Heart left ventricle (tissue), 16 donors: ENCODE measurements at regions of chr3 and their contacts with region 1.

Region 1: GRCh38 chr3:152471814-152472671 is 203.3 kb downstream of the MBNL1 start:
- DNase-seq: peak in 4 of 5 donors; percentile 42 to 68 (median 60)
- ATAC-seq: peak; percentile 65 to 77 (median 66)
- H3K4me3 ChIP-seq: peak overlapping the region in 9 of 12 donors; percentile 12 to 48 (median 42)
- H3K27ac ChIP-seq: peak overlapping the region in 2 of 12 donors; percentile 15 to 39
- H3K4me1 ChIP-seq: peaks cover 0 to 10% (median 0%) of the 10 kb centered on the region in 12 donors
- H3K27me3 ChIP-seq: no peaks in the 10 kb centered on the region
- CTCF ChIP-seq: peak; percentile 55 to 84 (median 74)
- POLR2A ChIP-seq: no peak

Region 2: DNA sequence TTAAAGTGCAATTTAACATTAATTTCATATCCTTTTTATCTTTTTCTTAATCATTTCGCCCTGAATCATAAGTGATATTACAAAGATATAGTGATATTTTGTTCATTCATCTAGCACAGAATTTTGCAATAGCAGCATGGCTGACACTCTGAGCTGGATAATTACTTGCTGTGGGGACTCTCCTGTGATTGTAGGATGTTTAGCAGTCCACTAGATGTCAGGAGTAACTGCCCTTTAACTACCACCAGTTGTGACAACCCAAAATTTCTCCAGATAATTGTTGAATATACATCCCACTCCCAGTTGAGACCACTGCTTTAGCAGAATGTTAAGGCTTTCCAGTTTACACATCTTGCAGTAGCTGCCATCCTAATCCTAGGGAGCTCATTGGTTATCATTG is 400.1 kb before region 1 on chr3:
- intact Hi-C with region 1: loop called in 6 of 10 experiments (anchors 2 to 10 kb)
- DNase-seq: no peak
- ATAC-seq: peak in 3 of 4 donors; percentile 52 to 68 (median 55)
- H3K4me3 ChIP-seq: no peak overlapping the region
- H3K27ac ChIP-seq: no peak overlapping the region
- H3K4me1 ChIP-seq: peaks cover 0 to 4% (median 0%) of the 10 kb centered on the region in 12 donors
- H3K27me3 ChIP-seq: no peaks in the 10 kb centered on the region
- CTCF ChIP-seq: peak; percentile 8 to 60 (median 41)
- POLR2A ChIP-seq: no peak

Region 3: GRCh38 chr3:152183473-152183872 is 288.6 kb before region 1 on chr3:
- intact Hi-C with region 1: loop called in 3 of 10 experiments (anchors 2 to 5 kb)
- DNase-seq: peak in 4 of 5 donors; percentile 30 to 53 (median 39)
- ATAC-seq: peak; percentile 58 to 83 (median 66)
- H3K4me3 ChIP-seq: no peak overlapping the region
- H3K27ac ChIP-seq: no peak overlapping the region
- H3K4me1 ChIP-seq: peaks cover 0 to 10% (median 0%) of the 10 kb centered on the region in 12 donors
- H3K27me3 ChIP-seq: no peaks in the 10 kb centered on the region
- CTCF ChIP-seq: peak; percentile 45 to 78 (median 62)
- POLR2A ChIP-seq: no peak

Region 4: DNA sequence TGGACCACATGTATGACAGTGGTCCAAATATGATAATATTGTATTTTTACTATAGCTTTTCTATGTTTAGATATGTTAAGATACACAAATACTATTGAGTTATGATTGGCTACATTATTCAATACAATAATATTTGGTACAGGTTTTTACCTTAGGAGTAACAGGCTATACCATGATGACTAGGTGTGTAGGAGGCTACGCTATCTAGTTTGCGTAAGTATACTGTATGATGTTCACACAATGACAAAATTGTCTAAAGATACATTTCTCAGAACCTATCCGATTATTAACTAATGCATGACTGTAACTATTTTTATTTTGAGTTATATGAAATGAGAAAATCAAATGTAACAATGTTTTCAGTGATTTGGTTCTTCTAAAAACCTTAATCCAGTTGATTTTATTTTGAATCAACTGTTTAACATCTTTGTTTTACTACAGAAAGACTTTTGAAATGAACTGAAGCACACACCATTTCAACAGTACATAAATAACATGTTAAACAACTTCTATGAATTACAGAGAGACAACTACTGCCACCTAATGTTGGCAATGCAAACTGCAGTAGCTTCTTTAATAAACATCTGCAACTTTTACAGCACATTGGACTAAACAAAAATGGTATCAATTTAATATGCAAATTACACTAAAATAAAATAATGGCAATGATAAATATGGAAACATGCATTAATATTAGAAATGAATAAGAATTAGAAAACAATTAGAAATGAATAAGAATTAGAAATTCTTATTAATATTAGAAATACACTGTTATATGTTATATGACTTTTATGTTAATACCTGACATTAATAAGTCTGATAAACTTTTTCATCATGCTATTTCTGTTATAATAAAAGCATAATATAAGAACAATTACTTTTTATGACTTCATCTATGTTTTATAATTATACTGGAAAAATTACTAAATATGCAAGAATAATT is 52.4 kb after region 1 on chr3:
- intact Hi-C with region 1: loop called in 8 of 10 experiments (anchors 5 to 10 kb)
- DNase-seq: peak in 2 of 5 donors; percentile 22 to 35
- ATAC-seq: no peak
- H3K4me3 ChIP-seq: no peak overlapping the region
- H3K27ac ChIP-seq: no peak overlapping the region
- H3K4me1 ChIP-seq: no peaks in the 10 kb centered on the region
- H3K27me3 ChIP-seq: no peaks in the 10 kb centered on the region
- CTCF ChIP-seq: peak; percentile 77 to 94 (median 86)
- POLR2A ChIP-seq: no peak

Region 5: DNA sequence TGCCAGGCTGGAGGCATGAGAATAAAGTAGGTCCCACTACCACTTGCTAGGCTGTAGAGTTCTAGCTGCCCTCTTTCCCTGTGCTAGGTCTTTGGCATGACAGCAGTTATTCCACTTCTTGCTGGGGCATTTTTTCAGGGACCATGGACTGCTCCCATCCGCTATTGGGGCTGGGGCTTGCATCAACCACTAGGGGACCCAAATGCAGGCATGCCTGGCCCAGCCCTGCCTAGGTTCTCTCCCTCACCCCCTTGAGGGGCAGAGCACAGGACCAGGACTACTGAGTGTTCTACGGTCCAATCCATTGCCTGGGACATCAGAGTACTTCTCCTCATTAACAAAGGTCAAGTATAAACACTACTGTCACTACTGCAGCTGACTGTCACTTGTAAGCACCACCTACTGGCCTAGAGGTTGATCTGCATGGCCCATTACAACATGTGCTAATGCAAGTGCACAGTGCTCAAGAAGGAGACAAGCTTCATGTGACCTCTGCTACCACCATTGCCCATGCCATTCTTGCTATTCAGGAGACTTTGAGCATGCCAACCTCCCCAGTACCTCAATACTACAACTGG is 67.2 kb after region 1 on chr3:
- intact Hi-C with region 1: loop called in 1 of 10 experiments (anchors 10 kb)
- DNase-seq: no peak
- ATAC-seq: no peak
- H3K4me3 ChIP-seq: no peak overlapping the region
- H3K27ac ChIP-seq: no peak overlapping the region
- H3K4me1 ChIP-seq: no peaks in the 10 kb centered on the region
- H3K27me3 ChIP-seq: no peaks in the 10 kb centered on the region
- CTCF ChIP-seq: no peak
- POLR2A ChIP-seq: no peak

Region 6: GRCh38 chr3:152574461-152575079 is 102.5 kb after region 1 on chr3:
- intact Hi-C with region 1: loop called in 9 of 10 experiments (anchors 2 to 10 kb)
- DNase-seq: peak; percentile 49 to 78 (median 56)
- ATAC-seq: peak; percentile 78 to 90 (median 86)
- H3K4me3 ChIP-seq: no peak overlapping the region
- H3K27ac ChIP-seq: peak overlapping the region in 1 of 12 donors; percentile 16
- H3K4me1 ChIP-seq: peaks cover 0 to 11% (median 1%) of the 10 kb centered on the region in 12 donors
- H3K27me3 ChIP-seq: no peaks in the 10 kb centered on the region
- CTCF ChIP-seq: peak; percentile 36 to 71 (median 65)
- POLR2A ChIP-seq: no peak